ENCODE measurements at regions of chr9 and their contacts with region 1.

Region 1: GRCh38 chr9:32644698-32645097 is 9.2 kb upstream of the TAF1L start:
- DNase-seq: no peak
- ATAC-seq: no peak
- H3K4me3 ChIP-seq: no peak overlapping the region
- H3K27ac ChIP-seq: no peak overlapping the region
- H3K4me1 ChIP-seq: no peaks in the 10 kb centered on the region
- H3K27me3 ChIP-seq: no peaks in the 10 kb centered on the region
- CTCF ChIP-seq: no peak

Region 2: GRCh38 chr9:32554107-32554506 is 90.6 kb before region 1 on chr9:
- CTCF ChIA-PET with region 1: no interaction called
- POLR2A ChIA-PET with region 1: no interaction called
- in situ Hi-C with region 1: no loop called
- intact Hi-C with region 1: no loop called
- DNase-seq: no peak
- ATAC-seq: no peak
- H3K4me3 ChIP-seq: no peak overlapping the region
- H3K27ac ChIP-seq: peak overlapping the region; percentile 84; the same call in 1 of the 2 replicates
- H3K4me1 ChIP-seq: peaks cover 15% of the 10 kb centered on the region
- H3K27me3 ChIP-seq: no peaks in the 10 kb centered on the region
- CTCF ChIP-seq: no peak

Region 3: DNA sequence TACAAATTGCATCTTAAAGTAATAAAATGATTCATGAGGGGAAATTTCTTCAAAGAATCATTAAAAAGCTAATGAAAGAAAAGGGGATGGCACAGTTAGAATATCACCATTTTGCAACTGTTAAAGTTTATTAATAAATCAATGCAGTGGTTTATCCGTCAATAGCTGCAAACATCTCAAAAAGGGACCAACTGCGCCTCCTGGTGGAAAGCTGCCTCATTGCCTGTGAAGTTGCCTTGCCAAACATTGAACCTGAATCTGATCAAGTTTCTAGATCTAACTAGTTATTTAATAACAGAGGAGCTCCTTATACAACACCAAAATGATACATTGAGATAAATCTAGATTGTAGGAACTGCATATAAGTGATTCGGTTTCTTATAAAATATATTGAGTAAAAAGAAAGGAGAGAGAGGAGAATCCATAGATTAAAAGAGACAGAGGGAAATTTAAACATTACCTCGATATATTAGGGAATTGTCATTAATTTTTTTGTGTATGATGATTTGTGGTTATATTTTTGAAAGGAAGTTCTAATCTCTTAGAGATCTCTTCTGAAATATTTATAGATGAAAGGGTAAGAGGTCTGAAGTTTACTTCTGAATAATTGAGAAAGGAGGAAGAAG is 64.9 kb before region 1 on chr9:
- CTCF ChIA-PET with region 1: no interaction called
- POLR2A ChIA-PET with region 1: no interaction called
- in situ Hi-C with region 1: no loop called
- intact Hi-C with region 1: loop called (anchors 10 kb)
- DNase-seq: no peak
- ATAC-seq: peak; percentile 59; the same call in 1 of the 2 replicates
- H3K4me3 ChIP-seq: no peak overlapping the region
- H3K27ac ChIP-seq: no peak overlapping the region
- H3K4me1 ChIP-seq: no peaks in the 10 kb centered on the region
- H3K27me3 ChIP-seq: peaks cover 2% of the 10 kb centered on the region; the same call in 1 of the 2 replicates
- CTCF ChIP-seq: peak; percentile 93

Region 4: DNA sequence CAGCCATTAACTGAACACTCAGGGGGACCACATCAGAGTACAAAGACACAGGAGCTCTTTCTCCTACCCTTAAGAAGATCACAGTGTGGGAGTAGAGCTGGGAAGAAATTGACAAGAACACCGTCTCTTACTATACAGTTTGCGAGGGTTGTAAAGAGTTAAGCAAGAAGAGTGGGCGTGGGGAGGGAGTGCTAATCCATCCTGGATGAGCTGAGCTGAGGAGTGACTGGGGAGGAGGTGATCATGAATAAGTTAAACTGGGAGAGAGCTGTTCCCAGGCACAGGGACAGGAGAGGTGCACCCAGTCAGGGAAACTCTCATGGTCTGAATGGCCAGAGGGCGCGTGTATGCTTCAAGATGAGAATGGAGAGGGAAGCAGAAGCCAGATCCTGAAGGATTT is 26.4 kb before region 1 on chr9:
- CTCF ChIA-PET with region 1: interaction called, 8 read pairs
- POLR2A ChIA-PET with region 1: interaction called, 16 read pairs
- in situ Hi-C with region 1: no loop called
- intact Hi-C with region 1: no loop called
- DNase-seq: no peak
- ATAC-seq: no peak
- H3K4me3 ChIP-seq: no peak overlapping the region
- H3K27ac ChIP-seq: no peak overlapping the region
- H3K4me1 ChIP-seq: no peaks in the 10 kb centered on the region
- H3K27me3 ChIP-seq: peaks cover 2% of the 10 kb centered on the region
- CTCF ChIP-seq: no peak

Region 5: DNA sequence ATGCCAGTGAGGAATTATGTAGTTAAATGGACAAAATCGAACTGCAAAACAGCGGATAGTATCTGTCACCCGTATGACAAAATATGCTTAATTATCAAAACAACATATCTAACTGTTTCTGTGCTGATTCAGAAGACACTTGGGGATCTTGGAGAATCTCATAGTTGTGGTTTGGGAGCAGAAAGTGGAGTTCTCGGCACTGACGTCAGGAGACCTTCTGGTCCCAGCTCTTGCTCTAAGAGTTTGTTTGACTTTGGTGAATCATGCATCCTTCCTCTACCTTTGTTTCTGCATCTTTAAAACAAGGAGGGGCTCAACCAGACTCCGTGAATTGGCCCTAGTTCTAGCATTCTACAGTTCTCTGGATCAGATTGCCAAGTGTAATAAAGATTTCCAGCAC is 27.8 kb after region 1 on chr9:
- CTCF ChIA-PET with region 1: no interaction called
- POLR2A ChIA-PET with region 1: no interaction called
- in situ Hi-C with region 1: no loop called
- intact Hi-C with region 1: no loop called
- DNase-seq: no peak
- ATAC-seq: no peak
- H3K4me3 ChIP-seq: no peak overlapping the region
- H3K27ac ChIP-seq: no peak overlapping the region
- H3K4me1 ChIP-seq: no peaks in the 10 kb centered on the region
- H3K27me3 ChIP-seq: no peaks in the 10 kb centered on the region
- CTCF ChIP-seq: no peak

Region 6: GRCh38 chr9:32725066-32725860 is 80.6 kb after region 1 on chr9:
- CTCF ChIA-PET with region 1: no interaction called
- POLR2A ChIA-PET with region 1: no interaction called
- in situ Hi-C with region 1: no loop called
- intact Hi-C with region 1: no loop called
- DNase-seq: no peak
- ATAC-seq: no peak
- H3K4me3 ChIP-seq: no peak overlapping the region
- H3K27ac ChIP-seq: no peak overlapping the region
- H3K4me1 ChIP-seq: no peaks in the 10 kb centered on the region
- H3K27me3 ChIP-seq: no peaks in the 10 kb centered on the region
- CTCF ChIP-seq: no peak